PC-3 (cell line): ENCODE measurements at regions of chr2 and their contacts with region 1.

Region 1: DNA sequence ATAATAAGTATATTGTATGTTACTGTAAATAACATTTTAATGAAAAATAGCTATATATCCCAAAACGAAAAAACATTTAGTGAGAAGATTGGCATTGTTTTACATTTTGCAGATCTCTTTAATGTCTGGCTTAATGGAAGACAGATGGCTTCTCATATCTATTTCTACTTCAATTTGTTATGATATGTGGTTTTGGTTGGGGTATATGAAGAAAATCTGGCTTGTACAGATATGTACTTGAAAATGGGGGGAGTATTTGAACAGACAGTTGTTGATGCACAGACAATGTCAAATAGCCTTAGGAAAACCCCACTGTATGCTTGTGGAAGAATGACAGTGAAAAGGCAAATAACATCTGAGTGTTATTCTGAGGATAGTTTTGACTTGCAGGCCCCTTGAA is 23.6 kb upstream of the GMCL1 start:
- DNase-seq: no peak
- ATAC-seq: no peak
- H3K4me3 ChIP-seq: no peak overlapping the region
- H3K27ac ChIP-seq: no peak overlapping the region
- H3K4me1 ChIP-seq: no peaks in the 10 kb centered on the region
- H3K27me3 ChIP-seq: no peaks in the 10 kb centered on the region
- CTCF ChIP-seq: no peak

Region 2: DNA sequence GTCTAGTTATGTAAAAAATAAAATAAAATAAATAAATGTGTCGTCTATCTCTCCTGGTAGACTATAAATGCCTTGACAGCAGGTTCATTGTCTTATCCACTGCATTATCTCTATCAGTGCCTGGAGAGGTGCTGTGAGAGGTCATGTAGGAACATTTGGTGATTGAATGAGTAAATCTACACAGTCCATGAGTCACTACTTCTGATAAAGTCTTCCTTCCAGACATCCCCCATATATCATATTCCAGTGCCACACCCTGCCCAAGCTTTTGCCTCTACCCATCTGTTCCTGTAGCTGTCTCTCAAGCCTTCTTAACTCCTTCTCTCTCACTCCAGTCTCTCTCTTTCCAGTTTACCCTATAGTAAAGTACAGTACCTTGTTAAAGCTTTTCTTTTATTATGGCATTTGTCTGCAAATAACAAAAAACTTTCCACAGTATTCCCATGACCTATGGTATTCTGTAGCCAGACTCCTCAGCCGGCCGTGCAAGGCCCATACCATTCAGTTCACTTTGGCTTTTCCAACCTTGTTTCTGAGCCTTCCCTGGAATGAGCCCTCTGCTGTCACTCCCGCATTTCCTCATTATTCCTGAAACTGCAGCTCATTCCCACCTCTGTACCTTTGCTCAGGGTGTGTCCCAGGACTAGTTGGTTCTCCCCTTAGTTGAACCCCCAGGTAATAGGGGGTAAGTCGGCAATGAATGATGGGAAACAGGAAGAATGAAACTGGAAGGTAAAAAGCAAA is 26.5 kb before region 1 on chr2:
- CTCF ChIA-PET with region 1: interaction called, 19 read pairs
- POLR2A ChIA-PET with region 1: no interaction called
- intact Hi-C with region 1: no loop called
- DNase-seq: peak; percentile 66
- ATAC-seq: peak; percentile 97
- H3K4me3 ChIP-seq: no peak overlapping the region
- H3K27ac ChIP-seq: peak overlapping the region; percentile 2; the same call in 1 of the 2 replicates
- H3K4me1 ChIP-seq: peaks cover 26% of the 10 kb centered on the region
- H3K27me3 ChIP-seq: no peaks in the 10 kb centered on the region
- CTCF ChIP-seq: no peak